ENCODE measurements at regions of chr17 and their contacts with region 1.

Region 1: GRCh38 chr17:17681187-17681848 is at the start of gene RAI1:
- DNase-seq: peak; percentile 79 to 88
- ATAC-seq: peak; percentile 80 to 88 (median 82)
- H3K4me3 ChIP-seq: peak within 1 kb of the TSS; percentile 88
- H3K27ac ChIP-seq: peak within 1 kb of the TSS; percentile 79
- H3K4me1 ChIP-seq: peaks cover 17% of the 10 kb centered on the region
- H3K27me3 ChIP-seq: no peaks in the 10 kb centered on the region
- CTCF ChIP-seq: peak; percentile 95
- total RNA-seq, gene RAI1: 6.8 to 7.9 (median 7.2) TPM

Region 2: DNA sequence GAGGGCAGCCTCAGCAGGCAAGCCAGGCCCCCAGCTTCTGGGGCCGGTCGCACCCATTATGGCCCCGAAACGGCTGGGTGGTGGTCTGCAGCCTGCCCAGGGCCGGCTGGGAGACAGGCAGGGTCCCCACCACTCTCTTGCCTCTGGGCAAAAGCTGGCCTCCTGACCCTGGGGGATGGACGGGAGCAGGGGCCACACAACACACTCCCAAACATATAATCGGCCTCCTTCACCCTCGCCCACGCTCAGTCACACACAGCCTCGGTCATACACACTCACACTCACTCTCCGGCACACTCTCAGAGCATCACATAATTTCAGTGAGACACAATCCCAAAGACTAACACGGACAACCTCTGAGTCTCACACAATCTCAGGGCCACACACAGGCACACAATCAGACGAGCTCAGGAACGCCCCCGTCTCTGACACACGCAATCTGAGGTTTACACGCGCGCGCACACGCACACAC is 90.4 kb before region 1 on chr17:
- intact Hi-C with region 1: no loop called
- DNase-seq: no peak
- ATAC-seq: no peak
- H3K4me3 ChIP-seq: peak overlapping the region; percentile 96
- H3K27ac ChIP-seq: peak overlapping the region; percentile 92
- H3K4me1 ChIP-seq: peaks cover 16% of the 10 kb centered on the region
- H3K27me3 ChIP-seq: no peaks in the 10 kb centered on the region
- CTCF ChIP-seq: no peak

Region 3: DNA sequence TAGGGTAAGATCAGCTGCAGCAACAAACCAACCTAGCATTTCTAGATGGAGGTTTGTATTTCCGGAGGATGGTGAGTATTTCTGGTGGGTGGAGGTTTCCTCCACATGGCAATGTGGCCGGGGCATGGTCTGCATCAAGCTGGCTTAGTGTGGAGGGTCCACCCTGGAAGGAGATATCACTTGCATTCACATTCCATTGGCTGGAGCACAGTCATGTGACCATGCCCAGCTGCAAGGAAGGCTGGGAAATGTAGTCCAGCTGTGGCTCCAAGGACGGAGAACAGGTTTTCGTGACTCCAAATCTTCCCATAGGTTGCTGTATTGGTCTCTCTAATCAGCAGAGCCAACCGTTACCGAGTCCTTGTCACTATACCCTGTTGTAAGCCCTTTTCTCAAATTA is 68.6 kb after region 1 on chr17:
- intact Hi-C with region 1: loop called in 1 of 2 experiments (anchors 2 kb)
- DNase-seq: no peak
- ATAC-seq: peak in 2 of 4 donors; percentile 22 to 31
- H3K4me3 ChIP-seq: no peak overlapping the region
- H3K27ac ChIP-seq: no peak overlapping the region
- H3K4me1 ChIP-seq: peaks cover 31% of the 10 kb centered on the region
- H3K27me3 ChIP-seq: no peaks in the 10 kb centered on the region
- CTCF ChIP-seq: no peak

Region 4: GRCh38 chr17:17774009-17774881 is 92.9 kb after region 1 on chr17:
- intact Hi-C with region 1: loop called in 1 of 2 experiments (anchors 10 kb)
- DNase-seq: peak; percentile 67 to 87
- ATAC-seq: peak; percentile 82 to 85 (median 84)
- H3K4me3 ChIP-seq: peak overlapping the region; percentile 66
- H3K27ac ChIP-seq: peak overlapping the region; percentile 89
- H3K4me1 ChIP-seq: peaks cover 50% of the 10 kb centered on the region
- H3K27me3 ChIP-seq: no peaks in the 10 kb centered on the region
- CTCF ChIP-seq: no peak

Region 5: DNA sequence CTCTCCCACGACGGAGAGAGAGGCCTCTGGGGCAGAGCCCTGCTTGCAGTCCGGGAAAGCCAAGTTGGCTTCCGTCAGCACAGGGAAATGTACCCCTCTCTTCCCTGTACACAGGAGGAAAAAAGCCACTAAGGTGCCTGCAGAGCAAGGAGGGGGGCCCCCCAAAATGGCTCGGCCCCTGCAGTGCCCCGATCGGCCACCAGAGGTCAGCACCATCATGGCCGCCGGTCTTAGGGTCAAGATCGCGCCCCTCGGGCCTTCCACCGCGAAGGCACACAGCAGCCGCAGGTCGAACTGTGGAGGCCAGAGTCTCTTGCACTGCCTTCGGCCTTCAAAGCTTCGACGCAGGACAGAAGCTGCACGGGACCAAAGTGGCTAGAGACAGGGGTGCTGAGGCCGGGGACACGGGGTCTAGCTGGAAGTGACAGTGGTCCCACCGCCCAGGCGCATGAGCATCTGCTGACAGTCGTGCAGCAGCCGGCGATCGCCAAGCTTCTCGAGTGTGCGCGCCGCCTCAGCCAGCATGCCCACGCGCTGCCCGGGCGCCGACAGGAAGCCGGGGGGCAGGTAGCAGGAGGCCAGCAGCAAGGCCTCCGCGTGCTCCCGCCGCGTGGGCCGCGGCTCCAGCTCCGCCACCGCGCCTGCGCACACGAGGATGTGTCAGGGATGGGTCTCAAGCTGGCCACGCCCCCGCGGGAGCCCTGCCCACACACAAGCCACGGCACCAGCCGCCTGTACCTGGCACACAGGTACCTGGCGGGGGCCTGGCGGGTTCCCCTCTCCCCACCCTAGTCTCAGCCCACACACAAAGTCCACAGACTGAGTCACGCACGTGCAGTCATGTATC is 131.1 kb after region 1 on chr17:
- intact Hi-C with region 1: no loop called
- DNase-seq: peak; percentile 77 to 89
- ATAC-seq: peak; percentile 57 to 70 (median 64)
- H3K4me3 ChIP-seq: no peak overlapping the region
- H3K27ac ChIP-seq: no peak overlapping the region
- H3K4me1 ChIP-seq: peaks cover 35% of the 10 kb centered on the region
- H3K27me3 ChIP-seq: no peaks in the 10 kb centered on the region
- CTCF ChIP-seq: peak; percentile 100

Region 6: DNA sequence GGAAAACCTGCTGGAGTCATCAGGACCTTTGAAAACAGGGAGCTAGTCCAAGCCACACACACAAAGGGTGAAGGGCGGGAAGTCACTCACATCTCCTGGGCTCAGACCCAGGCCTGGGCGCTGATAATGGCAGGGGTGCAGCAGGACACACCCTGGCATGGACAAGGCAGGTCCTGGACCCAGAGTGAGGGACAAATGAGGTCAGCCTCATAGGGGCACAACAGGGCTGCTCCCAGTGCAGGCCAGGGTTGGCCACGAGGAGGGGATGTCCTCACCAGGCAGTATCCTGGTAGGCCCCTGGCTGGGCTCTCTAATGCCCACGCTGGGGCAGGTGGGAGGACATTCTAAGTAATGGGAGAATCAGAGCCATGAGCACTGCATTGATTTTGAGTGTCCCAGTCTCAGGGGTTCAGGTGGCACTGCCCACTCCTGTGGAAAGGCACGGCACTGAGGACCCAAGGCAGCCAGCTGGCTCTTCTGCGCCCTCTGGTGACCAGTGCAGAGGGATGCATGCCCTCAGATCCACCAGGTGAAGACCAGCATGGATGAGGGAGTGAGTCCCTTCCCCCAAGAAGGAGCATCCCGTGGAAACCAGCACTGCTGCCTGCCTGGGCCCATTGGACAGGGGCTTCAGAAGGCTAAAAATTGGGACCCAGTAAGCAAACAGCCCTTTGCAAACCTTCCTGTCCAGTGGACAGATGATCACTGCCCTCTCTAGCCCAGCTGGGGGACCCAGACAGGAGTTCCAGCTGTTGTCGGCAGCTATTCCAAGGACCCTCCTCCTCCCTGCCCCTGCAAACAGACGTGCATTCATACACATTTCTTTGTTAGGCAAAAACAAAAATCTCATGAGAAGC is 178.8 kb after region 1 on chr17:
- intact Hi-C with region 1: loop called (anchors 2 to 5 kb)
- DNase-seq: peak; percentile 65 to 83
- ATAC-seq: peak; percentile 92 to 97 (median 93)
- H3K4me3 ChIP-seq: no peak overlapping the region
- H3K27ac ChIP-seq: peak overlapping the region; percentile 5
- H3K4me1 ChIP-seq: peaks cover 4% of the 10 kb centered on the region
- H3K27me3 ChIP-seq: no peaks in the 10 kb centered on the region
- CTCF ChIP-seq: peak; percentile 94

Region 7: GRCh38 chr17:17919169-17920107 is 238.1 kb after region 1 on chr17:
- intact Hi-C with region 1: loop called in 1 of 2 experiments (anchors 5 kb)
- DNase-seq: peak; percentile 62 to 82
- ATAC-seq: peak; percentile 61 to 74 (median 65)
- H3K4me3 ChIP-seq: no peak overlapping the region
- H3K27ac ChIP-seq: peak overlapping the region; percentile 54
- H3K4me1 ChIP-seq: peaks cover 59% of the 10 kb centered on the region
- H3K27me3 ChIP-seq: no peaks in the 10 kb centered on the region
- CTCF ChIP-seq: peak; percentile 71

Region 8: DNA sequence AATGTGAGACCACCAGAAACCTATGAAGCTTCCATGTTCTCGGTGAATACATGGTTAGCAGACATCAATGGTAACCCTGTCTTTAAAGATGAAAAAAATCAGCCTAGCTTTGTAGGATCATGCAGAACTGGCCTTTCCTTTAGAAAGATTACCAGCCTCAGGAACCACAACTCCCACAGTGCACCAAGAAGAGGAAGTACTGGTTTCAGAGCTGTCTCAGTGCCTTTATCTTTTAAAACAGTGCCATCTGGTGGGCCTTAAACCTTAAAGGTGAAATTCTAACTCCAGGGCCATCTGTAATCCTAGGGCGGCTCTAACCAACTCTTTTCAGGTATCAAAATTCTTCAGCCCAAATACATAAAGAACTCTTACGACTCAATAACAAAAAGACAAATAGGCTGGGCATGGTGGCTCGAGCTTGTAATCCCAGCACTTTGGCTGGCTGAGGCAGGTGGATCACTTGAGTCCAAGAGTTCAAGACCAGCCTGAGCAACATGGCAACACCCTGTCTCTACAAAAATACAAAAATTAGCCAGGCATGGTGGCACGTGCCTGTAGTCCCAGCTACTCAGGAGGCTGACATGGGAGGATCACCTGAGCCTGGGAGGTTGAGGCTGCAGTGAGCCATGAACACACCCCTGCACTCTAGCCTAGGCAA is 352.3 kb after region 1 on chr17:
- intact Hi-C with region 1: loop called (anchors 2 to 10 kb)
- DNase-seq: no peak
- ATAC-seq: peak; percentile 85 to 89 (median 88)
- H3K4me3 ChIP-seq: no peak overlapping the region
- H3K27ac ChIP-seq: peak overlapping the region; percentile 43
- H3K4me1 ChIP-seq: peaks cover 30% of the 10 kb centered on the region
- H3K27me3 ChIP-seq: no peaks in the 10 kb centered on the region
- CTCF ChIP-seq: peak; percentile 66

Region 9: GRCh38 chr17:18038861-18039534 is 357.7 kb after region 1 on chr17 and contains the starts of genes ATPAF2 and GID4:
- intact Hi-C with region 1: loop called (anchors 2 to 10 kb)
- DNase-seq: peak; percentile 100
- ATAC-seq: peak; percentile 93 to 94 (median 93)
- H3K4me3 ChIP-seq: peak within 1 kb of the TSS; percentile 90
- H3K27ac ChIP-seq: peak within 1 kb of the TSS; percentile 90
- H3K4me1 ChIP-seq: peaks cover 39% of the 10 kb centered on the region
- H3K27me3 ChIP-seq: no peaks in the 10 kb centered on the region
- CTCF ChIP-seq: no peak
- total RNA-seq, gene ATPAF2: 23.9 to 39.7 (median 30.4) TPM
- total RNA-seq, gene GID4: 22.4 to 39.6 (median 38.5) TPM

Region 10: GRCh38 chr17:18087610-18088491 is 406.5 kb after region 1 on chr17 and contains the start of gene DRG2:
- intact Hi-C with region 1: no loop called
- DNase-seq: peak; percentile 94 to 96
- ATAC-seq: peak; percentile 96 to 99 (median 96)
- H3K4me3 ChIP-seq: peak within 1 kb of the TSS; percentile 82
- H3K27ac ChIP-seq: peak within 1 kb of the TSS; percentile 84
- H3K4me1 ChIP-seq: peaks cover 8% of the 10 kb centered on the region
- H3K27me3 ChIP-seq: no peaks in the 10 kb centered on the region
- CTCF ChIP-seq: no peak
- total RNA-seq, gene DRG2: 23.7 to 33.5 (median 27.9) TPM